ENCODE measurements at regions of chr6 and their contacts with region 1.

Region 1: DNA sequence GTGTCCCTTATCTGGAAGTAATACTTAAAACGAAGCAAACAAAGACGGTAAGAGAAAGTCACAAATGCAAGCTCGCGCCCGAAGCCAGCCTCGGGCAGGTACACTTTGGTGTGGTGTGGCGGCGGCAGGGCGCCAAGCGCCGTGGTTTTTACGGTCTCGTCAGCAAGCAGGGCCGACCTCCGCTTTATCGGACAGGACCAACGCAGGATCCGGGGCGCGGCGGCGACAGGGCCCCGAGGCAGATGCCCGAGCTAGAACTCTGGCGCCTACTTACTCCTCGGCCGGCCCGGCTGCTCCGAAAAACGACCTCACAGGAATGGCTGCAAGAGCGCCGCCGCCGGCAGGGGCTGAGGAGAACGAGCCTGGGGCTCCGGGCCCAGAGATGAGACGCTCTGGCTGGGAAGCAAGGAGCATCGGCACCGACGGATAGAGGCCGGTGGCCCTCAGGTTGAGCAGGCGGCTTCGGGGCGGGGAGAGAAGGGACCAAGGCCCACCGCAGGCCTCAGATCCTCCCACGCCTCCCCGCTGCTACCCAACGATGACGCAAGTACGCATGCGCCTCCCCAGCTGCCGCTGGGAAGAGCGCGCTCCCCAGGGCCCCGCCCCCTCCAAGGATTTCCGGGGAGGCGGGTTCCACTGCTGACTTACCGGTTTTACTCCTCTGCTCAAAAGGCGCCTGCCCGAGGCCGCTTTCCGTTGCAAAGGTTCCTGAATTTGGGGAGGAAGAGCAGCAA is 60.6 kb downstream of the FAM217A start:
- DNase-seq: peak; percentile 87
- ATAC-seq: peak; percentile 75
- H3K4me3 ChIP-seq: peak overlapping the region; percentile 67
- H3K27ac ChIP-seq: peak overlapping the region; percentile 91
- H3K4me1 ChIP-seq: peaks cover 4% of the 10 kb centered on the region; the same call in 1 of the 2 replicates
- H3K27me3 ChIP-seq: no peaks in the 10 kb centered on the region
- CTCF ChIP-seq: peak; percentile 13 to 29 (median 18); a peak in 1 of 6 replicates
- EP300 ChIP-seq: no peak; a peak in 1 of 4 replicates
- POLR2A ChIP-seq: peak; percentile 95
- RAD21 ChIP-seq: no peak

Region 2: DNA sequence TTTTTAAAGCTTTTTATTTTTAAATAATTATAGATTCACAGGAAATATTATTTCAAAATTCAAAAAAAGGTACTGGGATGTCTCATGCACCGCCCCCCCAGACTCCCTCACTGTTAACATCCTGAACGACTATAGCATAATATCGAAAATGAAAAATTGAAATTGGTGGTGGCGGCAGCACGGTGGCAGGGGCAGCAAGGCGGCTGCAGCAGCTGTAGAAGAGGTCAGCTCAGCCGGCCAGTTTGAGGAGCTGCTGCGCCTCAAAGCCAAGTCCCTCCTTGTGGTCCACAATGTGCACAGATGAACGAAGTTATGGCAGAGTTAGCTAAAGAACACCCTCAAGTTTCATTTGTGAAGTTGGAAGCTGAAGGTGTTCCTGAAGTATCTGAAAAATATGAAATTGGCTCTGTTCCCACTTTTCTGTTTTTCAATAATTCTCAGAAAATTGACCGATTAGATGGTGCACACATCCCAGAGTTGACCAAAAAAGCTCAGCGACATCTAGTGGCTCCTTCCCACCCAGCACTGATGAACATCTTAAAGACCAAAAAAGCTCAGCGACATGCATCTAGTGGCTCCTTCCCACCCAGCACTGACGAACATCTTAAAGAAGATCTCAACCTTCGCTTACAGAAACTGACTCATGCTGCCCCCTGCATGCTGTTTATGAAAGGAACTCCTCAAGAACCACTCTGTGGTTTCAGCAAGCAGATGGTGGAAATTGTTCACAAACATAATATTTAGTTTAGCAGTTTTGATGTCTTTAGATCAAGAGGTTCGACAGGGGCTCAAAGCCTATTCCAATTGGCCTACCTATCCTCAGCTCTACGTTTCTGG is 40.2 kb before region 1 on chr6:
- CTCF ChIA-PET with region 1: interaction called, 14 read pairs
- POLR2A ChIA-PET with region 1: no interaction called
- RAD21 ChIA-PET with region 1: no interaction called
- SMC1A ChIA-PET with region 1: interaction called, 3 read pairs
- in situ Hi-C with region 1: no loop called
- intact Hi-C with region 1: no loop called
- DNase-seq: peak; percentile 38
- ATAC-seq: peak; percentile 97
- H3K4me3 ChIP-seq: no peak overlapping the region
- H3K27ac ChIP-seq: no peak overlapping the region
- H3K4me1 ChIP-seq: no peaks in the 10 kb centered on the region
- H3K27me3 ChIP-seq: no peaks in the 10 kb centered on the region
- CTCF ChIP-seq: peak; percentile 59 to 71 (median 64); a peak in 5 of 6 replicates
- EP300 ChIP-seq: no peak
- POLR2A ChIP-seq: no peak
- RAD21 ChIP-seq: peak; percentile 50

Region 3: GRCh38 chr6:3997177-3997770 is 21.1 kb before region 1 on chr6:
- CTCF ChIA-PET with region 1: interaction called, 18 read pairs
- POLR2A ChIA-PET with region 1: interaction called, 4 read pairs
- RAD21 ChIA-PET with region 1: interaction called, 7 read pairs
- SMC1A ChIA-PET with region 1: interaction called, 3 read pairs
- in situ Hi-C with region 1: no loop called
- intact Hi-C with region 1: no loop called
- DNase-seq: no peak
- ATAC-seq: no peak
- H3K4me3 ChIP-seq: no peak overlapping the region
- H3K27ac ChIP-seq: no peak overlapping the region
- H3K4me1 ChIP-seq: no peaks in the 10 kb centered on the region
- H3K27me3 ChIP-seq: no peaks in the 10 kb centered on the region
- CTCF ChIP-seq: no peak
- EP300 ChIP-seq: no peak
- POLR2A ChIP-seq: no peak
- RAD21 ChIP-seq: no peak

Region 4: DNA sequence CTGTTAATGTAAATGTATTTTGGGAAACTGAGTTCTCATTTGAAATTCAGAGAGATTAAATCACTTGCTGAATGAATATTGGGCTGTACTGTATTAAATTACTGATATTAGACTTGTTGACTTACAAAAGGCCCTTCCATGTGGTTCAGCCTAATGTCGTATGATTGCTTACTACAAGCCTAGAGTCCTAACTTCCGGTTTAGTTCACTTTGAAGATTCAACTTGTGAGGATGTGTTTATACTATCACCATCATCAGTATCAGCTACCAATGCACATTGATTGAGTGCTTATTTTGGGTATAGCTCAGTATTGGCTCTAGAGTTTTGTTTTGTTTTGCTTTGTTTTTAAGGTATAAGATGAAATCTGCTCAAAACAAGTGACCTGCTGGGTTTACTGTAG is 12.3 kb after region 1 on chr6:
- CTCF ChIA-PET with region 1: interaction called, 18 read pairs
- POLR2A ChIA-PET with region 1: interaction called, 3 read pairs
- RAD21 ChIA-PET with region 1: interaction called, 4 read pairs
- SMC1A ChIA-PET with region 1: interaction called, 10 read pairs
- in situ Hi-C with region 1: no loop called
- intact Hi-C with region 1: no loop called
- DNase-seq: no peak
- ATAC-seq: peak; percentile 51
- H3K4me3 ChIP-seq: no peak overlapping the region
- H3K27ac ChIP-seq: no peak overlapping the region
- H3K4me1 ChIP-seq: no peaks in the 10 kb centered on the region
- H3K27me3 ChIP-seq: no peaks in the 10 kb centered on the region
- CTCF ChIP-seq: no peak
- EP300 ChIP-seq: no peak
- POLR2A ChIP-seq: no peak
- RAD21 ChIP-seq: no peak

Region 5: GRCh38 chr6:4135665-4136353 is 117.5 kb after region 1 on chr6:
- CTCF ChIA-PET with region 1: interaction called, 6 read pairs
- POLR2A ChIA-PET with region 1: interaction called, 29 read pairs
- RAD21 ChIA-PET with region 1: interaction called, 21 read pairs
- SMC1A ChIA-PET with region 1: interaction called, 17 read pairs
- in situ Hi-C with region 1: no loop called
- intact Hi-C with region 1: loop called (anchors 5 kb)
- DNase-seq: peak; percentile 49
- ATAC-seq: peak; percentile 92
- H3K4me3 ChIP-seq: peak overlapping the region; percentile 83
- H3K27ac ChIP-seq: peak overlapping the region; percentile 57
- H3K4me1 ChIP-seq: peaks cover 11% of the 10 kb centered on the region
- H3K27me3 ChIP-seq: no peaks in the 10 kb centered on the region
- CTCF ChIP-seq: no peak
- EP300 ChIP-seq: no peak
- POLR2A ChIP-seq: peak; percentile 64
- RAD21 ChIP-seq: no peak

Region 6: DNA sequence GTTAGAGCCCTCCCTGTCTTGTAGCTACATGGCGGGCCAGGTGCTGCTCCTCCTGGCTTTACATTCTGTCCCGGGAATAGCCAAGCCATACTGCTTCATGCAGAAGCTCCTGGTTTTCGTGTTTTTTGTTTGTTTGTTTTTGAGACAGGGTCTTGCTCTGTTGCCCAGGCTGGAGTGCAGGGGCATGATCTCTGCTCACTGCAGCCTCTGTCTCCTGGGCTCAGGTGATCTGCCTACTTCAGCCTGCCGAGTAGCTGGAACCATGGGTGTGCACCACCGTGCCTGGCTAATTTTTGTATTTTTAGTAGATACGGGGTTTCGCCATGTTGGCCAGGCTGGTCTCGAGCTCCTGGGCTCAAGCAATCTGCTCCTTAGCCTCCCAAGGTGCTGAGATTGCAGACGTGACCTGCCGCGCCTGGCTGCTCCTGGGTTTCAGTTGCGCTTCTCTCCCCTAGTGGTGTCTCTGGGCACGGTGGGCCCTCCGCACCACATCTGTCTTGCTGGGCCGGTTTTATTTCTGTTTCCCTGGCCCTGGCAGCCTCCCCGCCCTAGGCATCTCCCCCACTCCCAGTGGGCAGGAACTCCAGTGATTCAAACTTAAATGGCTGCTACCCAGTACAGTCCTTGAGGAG is 770.7 kb after region 1 on chr6:
- CTCF ChIA-PET with region 1: no interaction called
- POLR2A ChIA-PET with region 1: no interaction called
- RAD21 ChIA-PET with region 1: no interaction called
- SMC1A ChIA-PET with region 1: no interaction called
- in situ Hi-C with region 1: no loop called
- intact Hi-C with region 1: loop called (anchors 10 kb)
- DNase-seq: no peak
- ATAC-seq: peak; percentile 97
- H3K4me3 ChIP-seq: peak overlapping the region; percentile 53; the same call in 1 of the 2 replicates
- H3K27ac ChIP-seq: peak overlapping the region; percentile 42
- H3K4me1 ChIP-seq: peaks cover 27% of the 10 kb centered on the region
- H3K27me3 ChIP-seq: no peaks in the 10 kb centered on the region
- CTCF ChIP-seq: peak; percentile 39 to 69 (median 43)
- EP300 ChIP-seq: no peak
- POLR2A ChIP-seq: no peak
- RAD21 ChIP-seq: peak; percentile 21; the same call in 1 of the 2 replicates

Measured in GM12878 (cell line).